Transverse colon (tissue), 4 donors: ENCODE measurements at regions of chr22 and their contacts with region 1.

Region 1: DNA sequence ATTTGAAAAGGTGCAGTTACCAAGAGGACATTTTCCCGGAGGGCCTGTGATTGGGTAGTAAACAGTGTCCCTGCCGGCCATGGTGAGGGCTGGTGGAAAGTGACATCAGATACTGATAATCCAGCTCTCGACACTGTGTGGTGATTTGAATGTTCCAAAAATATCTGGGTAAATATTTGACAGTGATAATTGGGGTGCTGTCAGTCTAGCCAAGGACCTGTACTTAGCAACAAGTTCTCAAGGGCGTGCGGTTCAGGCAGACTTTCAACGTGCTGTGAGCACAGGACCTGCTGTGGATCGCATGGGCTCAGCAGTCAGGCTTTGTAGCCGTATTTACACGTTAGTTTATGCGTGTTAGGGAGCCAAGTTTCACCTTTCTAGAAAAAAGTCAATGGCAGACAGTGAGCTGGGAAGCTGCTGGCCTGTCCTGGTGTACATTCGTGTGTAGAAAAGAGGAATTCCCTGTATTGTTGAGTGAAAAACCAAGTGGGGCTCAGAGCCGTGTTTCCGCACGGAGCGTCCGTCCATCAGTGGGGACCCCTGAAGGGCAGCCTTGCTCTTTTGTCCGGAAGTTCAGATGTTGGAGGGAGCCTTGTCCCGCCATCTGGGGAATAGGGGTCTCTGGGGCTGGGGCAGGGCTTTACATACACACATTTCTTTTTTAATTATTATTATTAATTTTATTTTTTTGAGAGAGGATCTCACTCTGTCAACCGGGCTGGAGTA is 11.3 kb downstream of the TRMU start:
- DNase-seq: no peak
- H3K4me3 ChIP-seq: no peak overlapping the region
- H3K27ac ChIP-seq: no peak overlapping the region
- H3K4me1 ChIP-seq: no peaks in the 10 kb centered on the region
- H3K27me3 ChIP-seq: no peaks in the 10 kb centered on the region
- CTCF ChIP-seq: no peak
- EP300 ChIP-seq: no peak
- POLR2A ChIP-seq: no peak

Region 2: GRCh38 chr22:46129390-46130041 is 217.3 kb before region 1 on chr22:
- in situ Hi-C with region 1: no loop called
- intact Hi-C with region 1: loop called (anchors 1 kb)
- DNase-seq: peak; percentile 61
- H3K4me3 ChIP-seq: no peak overlapping the region
- H3K27ac ChIP-seq: peak overlapping the region; percentile 3 to 46 (median 34)
- H3K4me1 ChIP-seq: peaks cover 0 to 12% (median 10%) of the 10 kb centered on the region in 4 donors
- H3K27me3 ChIP-seq: no peaks in the 10 kb centered on the region
- CTCF ChIP-seq: no peak
- EP300 ChIP-seq: no peak
- POLR2A ChIP-seq: no peak

Region 3: DNA sequence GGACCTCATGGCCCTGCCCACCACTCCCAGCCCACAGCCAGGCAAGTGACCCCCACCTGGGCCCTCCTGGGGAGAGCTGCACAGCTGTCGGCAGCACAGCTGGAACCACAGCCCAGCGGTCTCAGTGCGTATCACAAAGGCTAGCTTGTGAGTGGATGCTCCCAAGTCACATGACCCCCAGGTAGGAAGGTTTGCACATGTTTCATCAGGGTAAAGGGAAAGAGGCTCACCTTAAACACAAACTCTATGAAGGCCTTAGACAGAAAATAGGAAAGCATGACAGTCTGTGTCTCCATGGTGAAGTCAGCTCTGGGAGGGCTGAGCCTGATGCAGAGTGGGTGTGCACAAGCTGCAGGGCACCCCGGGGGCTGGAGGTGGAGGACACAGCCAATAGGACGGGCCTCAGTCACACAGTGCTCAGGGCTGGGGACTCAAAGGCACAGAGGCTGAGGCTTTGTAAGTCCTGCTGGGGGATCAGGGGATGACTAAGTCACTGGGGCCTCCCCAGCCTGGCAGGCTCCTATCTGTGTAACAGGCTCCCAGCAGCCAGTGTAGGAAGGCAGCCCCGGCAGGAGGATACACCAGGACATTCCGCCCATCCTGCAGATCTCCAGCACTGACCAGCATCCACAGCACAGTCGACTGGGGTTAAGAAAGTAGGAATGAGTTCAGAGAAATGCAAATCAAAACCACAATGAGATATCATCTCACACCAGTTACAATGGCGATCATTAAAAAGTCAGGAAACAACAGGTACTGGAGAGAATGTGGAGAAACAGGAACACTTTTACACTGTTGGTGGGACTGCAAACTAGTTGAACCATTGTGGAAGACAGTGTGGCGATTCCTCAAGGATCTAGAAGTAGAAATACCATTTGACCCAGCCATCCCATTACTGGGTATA is 168.6 kb after region 1 on chr22:
- in situ Hi-C with region 1: no loop called
- intact Hi-C with region 1: no loop called
- DNase-seq: no peak
- H3K4me3 ChIP-seq: no peak overlapping the region
- H3K27ac ChIP-seq: no peak overlapping the region
- H3K4me1 ChIP-seq: no peaks in the 10 kb centered on the region
- H3K27me3 ChIP-seq: no peaks in the 10 kb centered on the region
- CTCF ChIP-seq: no peak
- EP300 ChIP-seq: no peak
- POLR2A ChIP-seq: no peak

Region 4: GRCh38 chr22:46649141-46650077 is 302.6 kb after region 1 on chr22:
- in situ Hi-C with region 1: no loop called
- intact Hi-C with region 1: no loop called
- DNase-seq: no peak
- H3K4me3 ChIP-seq: no peak overlapping the region
- H3K27ac ChIP-seq: peak overlapping the region; percentile 17 to 63 (median 44)
- H3K4me1 ChIP-seq: peaks cover 23 to 49% (median 39%) of the 10 kb centered on the region in 4 donors
- H3K27me3 ChIP-seq: no peaks in the 10 kb centered on the region
- CTCF ChIP-seq: no peak
- EP300 ChIP-seq: no peak
- POLR2A ChIP-seq: no peak